ENCODE measurements at regions of chr14 and their contacts with region 1.

Region 1: GRCh38 chr14:60184146-60184904 is 19.1 kb upstream of the DHRS7 start:
- DNase-seq: no peak
- ATAC-seq: peak; percentile 59
- H3K4me3 Mint-ChIP-seq: peak overlapping the region; percentile 67
- H3K27ac Mint-ChIP-seq: peak overlapping the region; percentile 73
- H3K4me1 Mint-ChIP-seq: peaks cover 13% of the 10 kb centered on the region
- H3K27me3 Mint-ChIP-seq: no peaks in the 10 kb centered on the region

Region 2: GRCh38 chr14:59964251-59965007 is 219.9 kb before region 1 on chr14:
- CTCF ChIA-PET with region 1: interaction called, 108 read pairs
- DNase-seq: no peak
- ATAC-seq: peak; percentile 35
- H3K4me3 Mint-ChIP-seq: peak overlapping the region; percentile 72
- H3K27ac Mint-ChIP-seq: peak overlapping the region; percentile 48
- H3K4me1 Mint-ChIP-seq: peaks cover 17% of the 10 kb centered on the region
- H3K27me3 Mint-ChIP-seq: peaks cover 8% of the 10 kb centered on the region

Region 3: GRCh38 chr14:60091550-60092530 is 92.5 kb before region 1 on chr14 and contains the start of gene PCNX4:
- CTCF ChIA-PET with region 1: interaction called, 19 read pairs
- DNase-seq: peak; percentile 97
- ATAC-seq: peak; percentile 92
- H3K4me3 Mint-ChIP-seq: peak within 1 kb of the TSS; percentile 92
- H3K27ac Mint-ChIP-seq: peak within 1 kb of the TSS; percentile 94
- H3K4me1 Mint-ChIP-seq: peaks cover 39% of the 10 kb centered on the region
- H3K27me3 Mint-ChIP-seq: no peaks in the 10 kb centered on the region
- total RNA-seq, gene PCNX4: 35.6 to 39.1 TPM

Region 4: GRCh38 chr14:60171690-60172089 is 12.6 kb before region 1 on chr14:
- CTCF ChIA-PET with region 1: interaction called, 14 read pairs
- DNase-seq: no peak
- ATAC-seq: no peak
- H3K4me3 Mint-ChIP-seq: no peak overlapping the region
- H3K27ac Mint-ChIP-seq: no peak overlapping the region
- H3K4me1 Mint-ChIP-seq: peaks cover 6% of the 10 kb centered on the region
- H3K27me3 Mint-ChIP-seq: peaks cover 7% of the 10 kb centered on the region

Region 5: GRCh38 chr14:60220084-60220483 is 35.8 kb after region 1 on chr14:
- CTCF ChIA-PET with region 1: no interaction called
- DNase-seq: no peak
- ATAC-seq: no peak
- H3K4me3 Mint-ChIP-seq: no peak overlapping the region
- H3K27ac Mint-ChIP-seq: no peak overlapping the region
- H3K4me1 Mint-ChIP-seq: no peaks in the 10 kb centered on the region
- H3K27me3 Mint-ChIP-seq: no peaks in the 10 kb centered on the region

Measured in activated CD8-positive, alpha-beta memory T cell treated with anti-CD3 and anti-CD28 coated beads, Interleukin-2, amount 10 ng/mL, durations not matched to agents 7 days and 5 days (primary cell).